ENCODE measurements at regions of chr10 and their contacts with region 1.

Region 1: GRCh38 chr10:69408318-69409175 is 8.2 kb downstream of the TACR2 start:
- DNase-seq: peak; percentile 96 to 97
- ATAC-seq: peak; percentile 91 to 93
- H3K4me3 ChIP-seq: peak overlapping the region; percentile 28
- H3K27ac ChIP-seq: peak overlapping the region; percentile 85 to 92
- H3K4me1 ChIP-seq: peaks cover 14% of the 10 kb centered on the region
- CTCF ChIP-seq: peak; percentile 59
- EP300 ChIP-seq: no peak
- POLR2A ChIP-seq: peak; percentile 51
- RAD21 ChIP-seq: peak; percentile 34 to 79

Region 2: GRCh38 chr10:69237528-69238159 is 170.9 kb before region 1 on chr10:
- CTCF ChIA-PET with region 1: interaction called, 424 read pairs
- POLR2A ChIA-PET with region 1: interaction called, 5 read pairs
- DNase-seq: peak; percentile 66 to 81
- ATAC-seq: peak; percentile 95 to 99
- H3K4me3 ChIP-seq: no peak overlapping the region
- H3K27ac ChIP-seq: no peak overlapping the region; a peak in 1 of 6 replicates
- H3K4me1 ChIP-seq: peaks cover 6% of the 10 kb centered on the region
- CTCF ChIP-seq: peak; percentile 96
- EP300 ChIP-seq: no peak
- POLR2A ChIP-seq: no peak
- RAD21 ChIP-seq: peak; percentile 96 to 97

Region 3: GRCh38 chr10:69360485-69361324 is 47.8 kb before region 1 on chr10:
- CTCF ChIA-PET with region 1: no interaction called
- POLR2A ChIA-PET with region 1: no interaction called
- DNase-seq: peak; percentile 83 to 94
- ATAC-seq: peak; percentile 96 to 97
- H3K4me3 ChIP-seq: no peak overlapping the region
- H3K27ac ChIP-seq: peak overlapping the region; percentile 84 to 85
- H3K4me1 ChIP-seq: peaks cover 51% of the 10 kb centered on the region
- CTCF ChIP-seq: no peak
- EP300 ChIP-seq: no peak; a peak in 1 of 5 replicates
- POLR2A ChIP-seq: no peak
- RAD21 ChIP-seq: no peak; a peak in 1 of 5 replicates

Region 4: DNA sequence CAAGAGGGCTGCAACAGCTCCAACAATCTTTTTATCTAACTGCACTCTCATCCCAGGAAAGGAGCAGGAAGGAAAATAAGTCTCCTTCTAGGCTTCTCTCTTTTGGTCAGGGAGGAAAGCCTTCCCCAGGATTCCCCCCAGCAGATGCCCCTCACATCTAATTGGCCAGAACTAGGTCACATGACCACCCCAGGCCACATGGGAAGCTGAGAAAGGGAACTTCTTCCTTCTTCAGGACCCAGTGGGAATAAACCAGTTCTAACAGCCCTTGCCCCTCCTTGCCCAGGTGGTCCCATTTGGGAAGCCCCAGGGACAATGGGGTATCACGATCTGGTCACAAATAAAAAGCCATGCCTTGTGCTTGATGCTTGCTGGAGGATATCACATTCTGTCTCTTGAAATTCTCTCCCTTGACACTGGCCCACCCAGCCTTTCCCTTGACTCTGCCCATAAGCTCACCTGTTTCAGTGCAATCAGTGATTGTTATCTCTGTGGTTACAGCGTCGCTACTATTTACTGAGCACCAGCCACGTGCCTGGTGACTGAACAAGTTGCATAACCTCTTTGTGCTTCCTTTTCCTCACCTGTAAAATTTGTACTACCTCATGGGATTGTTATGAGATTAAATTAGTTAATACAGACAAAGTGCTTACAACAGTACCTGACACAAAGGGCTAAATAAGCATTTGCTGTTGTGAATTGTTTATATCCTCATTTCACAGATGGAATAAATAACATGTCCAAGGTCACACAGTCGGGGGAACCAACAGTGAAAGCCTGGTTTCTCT is 17.2 kb after region 1 on chr10:
- CTCF ChIA-PET with region 1: interaction called, 30 read pairs
- POLR2A ChIA-PET with region 1: no interaction called
- DNase-seq: no peak
- ATAC-seq: no peak
- H3K4me3 ChIP-seq: no peak overlapping the region
- H3K27ac ChIP-seq: peak overlapping the region; percentile 45 to 50
- H3K4me1 ChIP-seq: peaks cover 20% of the 10 kb centered on the region
- CTCF ChIP-seq: no peak
- EP300 ChIP-seq: no peak
- POLR2A ChIP-seq: no peak
- RAD21 ChIP-seq: no peak

Region 5: GRCh38 chr10:69458426-69459108 is 50.0 kb after region 1 on chr10:
- CTCF ChIA-PET with region 1: interaction called, 10 read pairs
- POLR2A ChIA-PET with region 1: no interaction called
- DNase-seq: no peak
- ATAC-seq: peak in 1 of 2 experiments; percentile 49; a peak in 2 of 6 replicates
- H3K4me3 ChIP-seq: no peak overlapping the region
- H3K27ac ChIP-seq: peak overlapping the region; percentile 15 to 59; a peak in 4 of 6 replicates
- H3K4me1 ChIP-seq: peaks cover 58% of the 10 kb centered on the region
- CTCF ChIP-seq: no peak
- EP300 ChIP-seq: no peak
- POLR2A ChIP-seq: no peak
- RAD21 ChIP-seq: no peak

Region 6: GRCh38 chr10:69506834-69507721 is 98.5 kb after region 1 on chr10:
- CTCF ChIA-PET with region 1: interaction called, 80 read pairs
- POLR2A ChIA-PET with region 1: interaction called, 3 read pairs
- DNase-seq: peak in 1 of 2 experiments; percentile 27
- ATAC-seq: peak; percentile 42 to 48
- H3K4me3 ChIP-seq: peak overlapping the region; percentile 25; the same call in 2 of the 3 replicates
- H3K27ac ChIP-seq: peak overlapping the region; percentile 65 to 91
- H3K4me1 ChIP-seq: peaks cover 13% of the 10 kb centered on the region
- CTCF ChIP-seq: no peak
- EP300 ChIP-seq: no peak
- POLR2A ChIP-seq: no peak
- RAD21 ChIP-seq: no peak

Region 7: DNA sequence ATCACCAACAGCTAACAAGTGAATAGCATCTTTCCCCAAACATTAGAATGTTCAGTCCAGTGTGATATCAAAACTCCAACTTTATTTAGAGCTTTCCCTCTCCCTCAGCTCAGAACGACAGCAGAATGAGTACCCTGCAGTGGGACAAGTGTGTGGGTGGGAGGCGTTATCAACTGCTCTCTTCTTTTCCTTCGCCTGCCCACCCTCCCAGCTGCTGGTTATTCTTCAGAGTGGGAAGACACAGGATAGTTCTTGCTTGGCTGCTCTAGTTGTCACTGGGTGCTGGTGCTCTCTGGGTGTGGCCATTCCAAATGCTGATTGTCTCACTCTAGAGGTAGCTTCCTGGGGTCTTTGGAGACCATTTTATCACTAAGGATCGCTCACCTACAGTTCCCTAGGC is 207.8 kb after region 1 on chr10:
- CTCF ChIA-PET with region 1: interaction called, 11 read pairs
- POLR2A ChIA-PET with region 1: no interaction called
- DNase-seq: no peak
- ATAC-seq: no peak
- H3K4me3 ChIP-seq: no peak overlapping the region
- H3K27ac ChIP-seq: no peak overlapping the region
- H3K4me1 ChIP-seq: no peaks in the 10 kb centered on the region
- CTCF ChIP-seq: no peak
- EP300 ChIP-seq: no peak
- POLR2A ChIP-seq: no peak
- RAD21 ChIP-seq: no peak

Region 8: GRCh38 chr10:69639291-69640195 is 231.0 kb after region 1 on chr10:
- CTCF ChIA-PET with region 1: interaction called, 107 read pairs
- POLR2A ChIA-PET with region 1: interaction called, 4 read pairs
- DNase-seq: peak; percentile 73 to 80
- ATAC-seq: peak; percentile 58 to 84
- H3K4me3 ChIP-seq: no peak overlapping the region
- H3K27ac ChIP-seq: no peak overlapping the region
- H3K4me1 ChIP-seq: no peaks in the 10 kb centered on the region
- CTCF ChIP-seq: peak; percentile 95
- EP300 ChIP-seq: no peak
- POLR2A ChIP-seq: no peak
- RAD21 ChIP-seq: peak; percentile 93